HepG2 (cell line): ENCODE measurements at regions of chr2 and their contacts with region 1.

Region 1: GRCh38 chr2:177212106-177212890 is at the start of gene HNRNPA3:
- DNase-seq: peak; percentile 98
- ATAC-seq: peak; percentile 93
- H3K4me3 ChIP-seq: peak within 1 kb of the TSS; percentile 85 to 86 (median 86)
- H3K27ac ChIP-seq: peak within 1 kb of the TSS; percentile 99
- H3K4me1 ChIP-seq: peaks cover 52% of the 10 kb centered on the region
- H3K27me3 ChIP-seq: no peaks in the 10 kb centered on the region; a peak in 1 of 5 replicates
- CTCF ChIP-seq: peak; percentile 48
- EP300 ChIP-seq: no peak; a peak in 1 of 4 replicates
- POLR2A ChIP-seq: peak; percentile 84 to 98
- RAD21 ChIP-seq: peak; percentile 38; the same call in 1 of the 2 replicates
- total RNA-seq, gene HNRNPA3: 97.7 and 164 TPM in 2 replicates

Region 2: DNA sequence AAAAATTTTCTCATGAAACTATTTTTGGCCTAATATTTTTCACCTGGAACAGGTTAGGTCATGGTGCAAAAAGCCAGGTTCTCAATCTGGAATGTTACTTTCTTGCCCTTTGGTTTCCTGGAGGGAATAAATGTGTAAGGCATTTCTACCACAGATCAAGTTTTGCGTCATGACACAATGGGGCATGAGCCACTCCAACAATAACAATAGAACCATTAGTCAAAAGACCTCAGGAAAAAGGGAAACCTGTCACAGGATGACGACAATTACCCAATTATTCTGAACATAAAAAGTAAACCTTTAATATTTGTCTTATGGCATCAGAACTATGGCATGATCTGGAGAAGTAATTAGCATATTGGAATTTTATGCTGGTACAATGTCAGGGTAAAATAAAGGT is 87.9 kb before region 1 on chr2:
- CTCF ChIA-PET with region 1: no interaction called
- POLR2A ChIA-PET with region 1: no interaction called
- in situ Hi-C with region 1: no loop called
- intact Hi-C with region 1: no loop called
- DNase-seq: no peak
- ATAC-seq: no peak
- H3K4me3 ChIP-seq: no peak overlapping the region
- H3K27ac ChIP-seq: no peak overlapping the region
- H3K4me1 ChIP-seq: peaks cover 3% of the 10 kb centered on the region; the same call in 1 of the 2 replicates
- H3K27me3 ChIP-seq: peaks cover 0 to under 1% of the 10 kb centered on the region in 2 experiments; a peak in 1 of 5 replicates
- CTCF ChIP-seq: no peak
- EP300 ChIP-seq: no peak
- POLR2A ChIP-seq: no peak
- RAD21 ChIP-seq: no peak

Region 3: GRCh38 chr2:177169810-177170514 is 42.3 kb before region 1 on chr2:
- CTCF ChIA-PET with region 1: no interaction called
- POLR2A ChIA-PET with region 1: interaction called, 36 read pairs
- in situ Hi-C with region 1: loop called (anchors 5 kb)
- intact Hi-C with region 1: no loop called
- DNase-seq: peak; percentile 86
- ATAC-seq: peak; percentile 46
- H3K4me3 ChIP-seq: no peak overlapping the region
- H3K27ac ChIP-seq: peak overlapping the region; percentile 69
- H3K4me1 ChIP-seq: peaks cover 96% of the 10 kb centered on the region
- H3K27me3 ChIP-seq: no peaks in the 10 kb centered on the region
- CTCF ChIP-seq: no peak
- EP300 ChIP-seq: peak in 1 of 2 experiments; percentile 73; a peak in 2 of 4 replicates
- POLR2A ChIP-seq: 0 out of 4 replicates have a peak, but pooled peaks of 1 of the 2 experiments have one; percentile 35
- RAD21 ChIP-seq: peak; percentile 25; the same call in 1 of the 2 replicates

Region 4: GRCh38 chr2:177187631-177188312 is 24.5 kb before region 1 on chr2:
- CTCF ChIA-PET with region 1: no interaction called
- POLR2A ChIA-PET with region 1: interaction called, 25 read pairs
- in situ Hi-C with region 1: no loop called
- intact Hi-C with region 1: loop called (anchors 1 kb)
- DNase-seq: peak; percentile 95
- ATAC-seq: peak; percentile 83
- H3K4me3 ChIP-seq: peak overlapping the region; percentile 10 to 56 (median 17)
- H3K27ac ChIP-seq: peak overlapping the region; percentile 90
- H3K4me1 ChIP-seq: peaks cover 70% of the 10 kb centered on the region
- H3K27me3 ChIP-seq: no peaks in the 10 kb centered on the region
- CTCF ChIP-seq: no peak
- EP300 ChIP-seq: peak; percentile 39 to 91; a peak in 2 of 4 replicates
- POLR2A ChIP-seq: peak; percentile 66 to 71; a peak in 3 of 4 replicates
- RAD21 ChIP-seq: peak; percentile 6; the same call in 1 of the 2 replicates

Region 5: DNA sequence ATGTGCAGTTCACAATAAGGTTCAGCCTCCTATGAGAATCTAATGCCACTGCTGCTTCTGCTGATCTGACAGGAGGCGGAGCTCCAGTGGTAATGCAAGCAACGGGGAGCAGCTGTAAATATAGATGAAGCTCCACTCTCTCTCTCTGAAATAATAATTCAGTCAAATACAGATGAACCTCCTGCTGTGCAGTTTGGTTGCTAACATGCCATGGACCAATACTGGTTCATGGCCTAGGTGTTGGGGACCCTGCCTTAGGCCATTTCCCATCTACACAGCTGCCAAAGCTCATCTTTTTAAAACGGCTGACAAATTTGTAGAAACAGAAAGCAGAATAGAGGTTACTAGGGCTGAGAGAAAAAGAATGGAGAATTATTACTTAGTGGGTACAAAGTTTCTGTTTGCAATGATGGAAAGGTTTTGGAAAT is 10.4 kb before region 1 on chr2:
- CTCF ChIA-PET with region 1: no interaction called
- POLR2A ChIA-PET with region 1: interaction called, 61 read pairs
- in situ Hi-C with region 1: no loop called
- intact Hi-C with region 1: no loop called
- DNase-seq: peak; percentile 30
- ATAC-seq: peak; percentile 72
- H3K4me3 ChIP-seq: peak overlapping the region in 1 of 3 experiments; percentile 41; a peak in 4 of 6 replicates
- H3K27ac ChIP-seq: peak overlapping the region; percentile 35
- H3K4me1 ChIP-seq: peaks cover 36% of the 10 kb centered on the region
- H3K27me3 ChIP-seq: no peaks in the 10 kb centered on the region
- CTCF ChIP-seq: no peak
- EP300 ChIP-seq: no peak
- POLR2A ChIP-seq: no peak
- RAD21 ChIP-seq: no peak

Region 6: DNA sequence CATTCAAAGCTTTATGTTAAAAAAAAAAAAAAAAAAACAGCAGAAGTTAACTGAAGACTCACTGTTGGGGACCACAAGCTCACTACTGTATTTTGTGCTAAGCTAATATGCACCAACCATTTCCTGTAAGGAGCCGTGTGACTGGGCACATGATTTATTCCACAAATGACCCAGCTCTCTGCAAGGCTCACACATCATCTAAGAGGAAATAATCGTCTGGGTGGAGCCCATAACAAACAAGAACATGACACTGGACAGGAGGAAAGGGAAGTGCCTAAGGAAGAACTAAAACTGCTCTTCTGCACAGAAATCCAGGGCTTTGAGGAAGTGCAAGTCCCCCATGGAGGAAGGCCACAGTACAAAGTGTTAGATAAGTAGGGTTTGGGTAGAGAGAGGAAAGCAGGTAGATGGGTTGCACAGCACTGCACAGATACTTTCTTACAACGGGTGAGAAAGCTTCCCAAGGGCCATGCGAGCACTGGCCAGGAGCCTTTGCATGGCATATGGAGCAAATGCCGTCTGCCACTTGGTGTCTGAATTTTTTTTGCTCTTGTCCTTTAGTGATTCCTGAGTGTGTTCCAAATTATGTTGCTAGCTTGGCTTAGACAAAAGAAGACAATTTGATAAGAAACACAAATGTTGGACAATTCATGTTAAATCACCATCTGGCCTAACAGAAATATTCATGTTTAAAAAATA is 27.8 kb after region 1 on chr2:
- CTCF ChIA-PET with region 1: no interaction called
- POLR2A ChIA-PET with region 1: interaction called, 17 read pairs
- in situ Hi-C with region 1: no loop called
- intact Hi-C with region 1: no loop called
- DNase-seq: no peak
- ATAC-seq: peak; percentile 2; the same call in 2 of the 3 replicates
- H3K4me3 ChIP-seq: no peak overlapping the region
- H3K27ac ChIP-seq: peak overlapping the region; percentile 37
- H3K4me1 ChIP-seq: peaks cover 96% of the 10 kb centered on the region
- H3K27me3 ChIP-seq: no peaks in the 10 kb centered on the region
- CTCF ChIP-seq: no peak
- EP300 ChIP-seq: no peak
- POLR2A ChIP-seq: no peak
- RAD21 ChIP-seq: no peak